Caco-2 (cell line): ENCODE measurements at regions of chr1 and their contacts with region 1.

Region 1: GRCh38 chr1:15923241-15923640 is 52.7 kb downstream of the ZBTB17 start:
- DNase-seq: no peak
- H3K4me3 ChIP-seq: no peak overlapping the region
- H3K4me3 Mint-ChIP-seq: no peak overlapping the region
- H3K27ac Mint-ChIP-seq: no peak overlapping the region
- H3K4me1 ChIP-seq: peaks cover 13% of the 10 kb centered on the region; the same call in 1 of the 2 replicates
- H3K4me1 Mint-ChIP-seq: no peaks in the 10 kb centered on the region
- H3K27me3 ChIP-seq: no peaks in the 10 kb centered on the region
- H3K27me3 Mint-ChIP-seq: no peaks in the 10 kb centered on the region
- CTCF ChIP-seq: no peak

Region 2: GRCh38 chr1:15668089-15668754 is 255.0 kb before region 1 on chr1:
- CTCF ChIA-PET with region 1: no interaction called
- POLR2A ChIA-PET with region 1: no interaction called
- intact Hi-C with region 1: no loop called
- DNase-seq: no peak
- H3K4me3 ChIP-seq: no peak overlapping the region
- H3K4me3 Mint-ChIP-seq: no peak overlapping the region
- H3K27ac Mint-ChIP-seq: no peak overlapping the region
- H3K4me1 ChIP-seq: no peaks in the 10 kb centered on the region
- H3K4me1 Mint-ChIP-seq: no peaks in the 10 kb centered on the region
- H3K27me3 ChIP-seq: no peaks in the 10 kb centered on the region
- H3K27me3 Mint-ChIP-seq: no peaks in the 10 kb centered on the region
- CTCF ChIP-seq: no peak

Region 3: GRCh38 chr1:15803354-15803753 is 119.9 kb before region 1 on chr1:
- CTCF ChIA-PET with region 1: no interaction called
- POLR2A ChIA-PET with region 1: interaction called, 4 read pairs
- intact Hi-C with region 1: loop called (anchors 5 kb)
- DNase-seq: no peak
- H3K4me3 ChIP-seq: no peak overlapping the region
- H3K4me3 Mint-ChIP-seq: no peak overlapping the region
- H3K27ac Mint-ChIP-seq: no peak overlapping the region
- H3K4me1 ChIP-seq: peaks cover 35% of the 10 kb centered on the region
- H3K4me1 Mint-ChIP-seq: peaks cover 45% of the 10 kb centered on the region
- H3K27me3 ChIP-seq: no peaks in the 10 kb centered on the region
- H3K27me3 Mint-ChIP-seq: no peaks in the 10 kb centered on the region
- CTCF ChIP-seq: peak; percentile 31 to 41

Region 4: GRCh38 chr1:15937706-15938168 is 14.5 kb after region 1 on chr1:
- CTCF ChIA-PET with region 1: no interaction called
- POLR2A ChIA-PET with region 1: no interaction called
- intact Hi-C with region 1: no loop called
- DNase-seq: peak in 1 of 2 experiments; percentile 28
- H3K4me3 ChIP-seq: no peak overlapping the region
- H3K4me3 Mint-ChIP-seq: no peak overlapping the region
- H3K27ac Mint-ChIP-seq: peak overlapping the region; percentile 79
- H3K4me1 ChIP-seq: no peaks in the 10 kb centered on the region
- H3K4me1 Mint-ChIP-seq: no peaks in the 10 kb centered on the region
- H3K27me3 ChIP-seq: no peaks in the 10 kb centered on the region
- H3K27me3 Mint-ChIP-seq: no peaks in the 10 kb centered on the region
- CTCF ChIP-seq: no peak